Ascending aorta (tissue), 2 donors: ENCODE measurements at regions of chr1 and their contacts with region 1.

Region 1: DNA sequence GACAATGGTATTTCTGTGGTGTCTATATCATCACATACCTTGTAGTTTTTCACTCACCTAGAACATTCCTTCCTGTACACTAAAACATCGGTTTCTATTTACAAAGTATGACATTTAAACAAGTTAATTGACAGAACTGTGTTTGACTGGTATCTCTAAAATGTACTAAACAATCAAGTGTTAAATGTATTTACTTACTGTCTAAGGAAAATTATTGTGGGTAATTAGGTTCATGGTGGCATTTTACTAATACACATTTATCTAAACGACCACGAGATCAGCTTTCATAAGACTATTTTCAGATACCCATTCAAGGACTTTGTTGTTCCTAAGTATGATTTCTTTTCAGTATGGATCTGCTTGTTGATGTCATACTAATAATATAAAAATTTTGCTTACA is 115.2 kb downstream of the ADGRL2 start:
- DNase-seq: no peak
- H3K4me3 ChIP-seq: no peak overlapping the region
- H3K27ac ChIP-seq: no peak overlapping the region
- H3K4me1 ChIP-seq: no peaks in the 10 kb centered on the region
- H3K27me3 ChIP-seq: no peaks in the 10 kb centered on the region
- CTCF ChIP-seq: no peak

Region 2: GRCh38 chr1:81899214-81899821 is 16.6 kb before region 1 on chr1:
- intact Hi-C with region 1: loop called (anchors 1 kb)
- DNase-seq: no peak
- H3K4me3 ChIP-seq: no peak overlapping the region
- H3K27ac ChIP-seq: no peak overlapping the region
- H3K4me1 ChIP-seq: peaks cover 0 to 5% of the 10 kb centered on the region in 2 donors
- H3K27me3 ChIP-seq: no peaks in the 10 kb centered on the region
- CTCF ChIP-seq: no peak